ENCODE measurements at regions of chr6 and their contacts with region 1.

Region 1: DNA sequence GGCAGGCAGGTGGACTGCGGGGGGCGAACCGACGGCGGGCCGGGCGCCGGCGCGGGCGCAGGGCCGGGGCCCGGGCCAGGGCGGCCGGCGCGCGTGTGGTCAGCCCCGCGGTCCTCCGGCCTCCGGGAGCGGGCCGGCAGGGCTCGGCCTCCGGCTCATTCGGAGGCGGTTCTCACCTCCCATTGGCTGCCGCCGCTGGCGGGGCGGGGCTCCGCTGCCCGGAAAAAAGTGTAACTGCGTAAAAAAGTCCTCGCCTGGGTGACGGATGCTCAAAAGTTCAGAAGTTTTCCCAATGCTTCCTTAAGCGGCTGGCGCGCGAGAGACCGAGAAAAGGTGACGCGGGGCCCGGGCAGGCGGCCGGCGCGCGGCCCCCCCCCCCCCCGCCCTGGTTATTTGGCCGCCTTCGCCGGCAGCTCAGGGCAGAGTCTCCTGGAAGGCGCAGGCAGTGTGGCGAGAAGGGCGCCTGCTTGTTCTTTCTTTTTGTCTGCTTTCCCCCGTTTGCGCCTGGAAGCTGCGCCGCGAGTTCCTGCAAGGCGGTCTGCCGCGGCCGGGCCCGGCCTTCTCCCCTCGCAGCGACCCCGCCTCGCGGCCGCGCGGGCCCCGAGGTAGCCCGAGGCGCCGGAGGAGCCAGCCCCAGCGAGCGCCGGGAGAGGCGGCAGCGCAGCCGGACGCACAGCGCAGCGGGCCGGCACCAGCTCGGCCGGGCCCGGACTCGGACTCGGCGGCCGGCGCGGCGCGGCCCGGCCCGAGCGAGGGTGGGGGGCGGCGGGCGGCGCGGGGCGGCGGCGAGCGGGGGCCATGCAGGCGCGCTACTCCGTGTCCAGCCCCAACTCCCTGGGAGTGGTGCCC is at the start of gene FOXC1:
- DNase-seq: peak; percentile 94
- CTCF ChIP-seq: no peak

Region 2: GRCh38 chr6:2103644-2104523 is 494.0 kb after region 1 on chr6:
- in situ Hi-C with region 1: loop called (anchors 25 kb)
- DNase-seq: peak; percentile 36
- CTCF ChIP-seq: peak; percentile 62

Measured in GM13977 (cell line).